ENCODE measurements at regions of chr9 and their contacts with region 1.

Region 1: DNA sequence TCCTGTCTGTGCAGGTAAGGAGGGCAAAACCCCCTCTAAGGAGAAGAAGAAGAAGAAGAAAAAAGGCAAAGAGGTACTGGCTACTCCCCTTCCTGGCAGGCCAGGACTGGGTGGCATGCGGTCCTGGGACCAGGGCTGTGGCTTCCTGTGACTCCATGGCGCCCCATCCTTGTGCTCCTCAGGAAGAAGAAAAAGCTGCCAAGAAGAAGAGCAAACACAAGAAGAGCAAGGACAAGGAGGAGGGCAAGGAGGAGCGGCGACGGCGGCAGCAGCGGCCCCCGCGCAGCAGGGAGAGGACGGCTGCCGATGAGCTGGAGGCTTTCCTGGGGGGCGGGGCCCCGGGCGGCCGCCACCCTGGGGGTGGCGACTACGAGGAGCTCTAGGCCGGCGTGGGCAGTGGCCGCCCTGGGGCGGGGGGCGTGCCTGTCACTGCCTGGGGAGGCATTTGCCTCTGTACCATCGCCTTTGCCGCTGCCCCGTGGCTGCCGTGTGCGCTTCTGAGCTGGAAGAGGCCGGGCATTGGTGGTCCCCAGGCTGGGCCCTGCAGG is 2.1 kb upstream of the AJM1 start:
- DNase-seq: no peak
- H3K4me3 ChIP-seq: no peak overlapping the region
- H3K4me3 Mint-ChIP-seq: no peak overlapping the region
- H3K27ac ChIP-seq: no peak overlapping the region
- H3K27ac Mint-ChIP-seq: peak overlapping the region in 4 of 7 donors; percentile 54 to 85 (median 78)
- H3K4me1 ChIP-seq: peaks cover 15 to 25% of the 10 kb centered on the region in 2 donors
- H3K4me1 Mint-ChIP-seq: peaks cover 8% of the 10 kb centered on the region
- H3K27me3 ChIP-seq: peaks cover 2 to 24% of the 10 kb centered on the region in 2 donors
- H3K27me3 Mint-ChIP-seq: peaks cover 10 to 30% (median 21%) of the 10 kb centered on the region in 3 donors
- CTCF ChIP-seq: no peak

Region 2: GRCh38 chr9:136762915-136763648 is 77.1 kb before region 1 on chr9:
- intact Hi-C with region 1: no loop called
- DNase-seq: peak in 1 of 3 donors; percentile 28
- H3K4me3 ChIP-seq: no peak overlapping the region
- H3K4me3 Mint-ChIP-seq: no peak overlapping the region
- H3K27ac ChIP-seq: no peak overlapping the region
- H3K27ac Mint-ChIP-seq: no peak overlapping the region
- H3K4me1 ChIP-seq: no peaks in the 10 kb centered on the region
- H3K4me1 Mint-ChIP-seq: peaks cover 13% of the 10 kb centered on the region
- H3K27me3 ChIP-seq: no peaks in the 10 kb centered on the region
- H3K27me3 Mint-ChIP-seq: peaks cover 5 to 18% (median 18%) of the 10 kb centered on the region in 3 donors
- CTCF ChIP-seq: no peak

Region 3: GRCh38 chr9:136807281-136808074 is 32.7 kb before region 1 on chr9 and contains the start of gene RABL6:
- intact Hi-C with region 1: loop called in 1 of 2 experiments (anchors 5 kb)
- DNase-seq: peak; percentile 61 to 75 (median 67)
- H3K4me3 ChIP-seq: peak within 1 kb of the TSS; percentile 74 to 92 (median 87)
- H3K4me3 Mint-ChIP-seq: peak within 1 kb of the TSS; percentile 86 to 89
- H3K27ac ChIP-seq: peak within 1 kb of the TSS; percentile 72 to 84
- H3K27ac Mint-ChIP-seq: peak within 1 kb of the TSS; percentile 80 to 93 (median 88)
- H3K4me1 ChIP-seq: peaks cover 21 to 35% of the 10 kb centered on the region in 2 donors
- H3K4me1 Mint-ChIP-seq: peaks cover 28% of the 10 kb centered on the region
- H3K27me3 ChIP-seq: peaks cover 0 to 2% of the 10 kb centered on the region in 2 donors
- H3K27me3 Mint-ChIP-seq: peaks cover 1 to 8% (median 3%) of the 10 kb centered on the region in 3 donors
- CTCF ChIP-seq: no peak
- polyA plus RNA-seq, gene RABL6: 6.7 to 30.9 (median 8.1) TPM

Region 4: DNA sequence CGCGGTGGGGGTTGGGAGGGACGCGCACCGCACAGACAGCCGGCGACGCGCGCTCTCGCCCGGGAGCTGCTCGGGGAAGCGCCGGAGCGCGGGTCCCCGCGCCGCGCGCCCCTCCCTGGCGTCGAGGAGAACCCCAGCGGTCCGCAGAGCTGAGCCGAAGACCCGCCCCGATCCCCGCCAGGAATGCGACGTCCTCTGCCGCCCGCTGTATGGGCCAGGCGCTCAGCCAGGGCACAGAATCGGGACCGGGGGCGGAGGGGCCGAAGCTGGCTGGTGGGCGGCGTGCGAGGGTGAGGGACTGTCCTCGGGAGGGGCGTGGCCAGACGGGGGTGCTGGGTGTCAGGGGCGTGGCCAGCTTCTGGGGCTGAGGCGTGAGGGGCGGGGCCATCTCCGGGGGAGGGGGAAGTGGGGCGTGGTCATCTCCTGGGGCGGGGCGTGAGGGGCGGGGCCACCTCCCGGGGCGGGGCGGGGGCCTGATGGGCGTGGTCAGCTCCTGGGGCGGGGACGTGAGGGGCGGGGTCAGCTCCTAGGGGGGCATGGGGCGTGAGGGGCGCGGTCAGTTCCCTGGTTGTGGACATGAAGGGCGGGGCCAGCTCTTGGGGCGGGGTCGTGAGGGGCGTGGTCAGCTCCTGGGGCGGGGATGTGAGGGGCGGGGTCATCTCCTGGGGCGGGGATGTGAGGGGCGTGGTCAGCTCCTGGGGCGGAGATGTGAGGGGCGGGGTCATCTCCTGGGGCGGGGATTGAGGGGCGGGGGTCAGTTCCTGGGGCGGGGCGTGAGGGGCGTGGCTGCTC is 138.1 kb after region 1 on chr9:
- intact Hi-C with region 1: no loop called
- DNase-seq: peak; percentile 15 to 58 (median 36)
- H3K4me3 ChIP-seq: peak overlapping the region in 1 of 3 experiments; percentile 67
- H3K4me3 Mint-ChIP-seq: peak overlapping the region in 1 of 2 donors; percentile 70
- H3K27ac ChIP-seq: no peak overlapping the region
- H3K27ac Mint-ChIP-seq: no peak overlapping the region
- H3K4me1 ChIP-seq: peaks cover 22 to 35% of the 10 kb centered on the region in 2 donors
- H3K4me1 Mint-ChIP-seq: peaks cover 19% of the 10 kb centered on the region
- H3K27me3 ChIP-seq: peaks cover 0 to 22% of the 10 kb centered on the region in 2 donors
- H3K27me3 Mint-ChIP-seq: peaks cover 20 to 59% (median 28%) of the 10 kb centered on the region in 3 donors
- CTCF ChIP-seq: no peak

Measured in CD14-positive monocyte (primary cell).